Right ventricle myocardium inferior (tissue), 1 donor: ENCODE measurements at regions of chr16 and their contacts with region 1.

Region 1: DNA sequence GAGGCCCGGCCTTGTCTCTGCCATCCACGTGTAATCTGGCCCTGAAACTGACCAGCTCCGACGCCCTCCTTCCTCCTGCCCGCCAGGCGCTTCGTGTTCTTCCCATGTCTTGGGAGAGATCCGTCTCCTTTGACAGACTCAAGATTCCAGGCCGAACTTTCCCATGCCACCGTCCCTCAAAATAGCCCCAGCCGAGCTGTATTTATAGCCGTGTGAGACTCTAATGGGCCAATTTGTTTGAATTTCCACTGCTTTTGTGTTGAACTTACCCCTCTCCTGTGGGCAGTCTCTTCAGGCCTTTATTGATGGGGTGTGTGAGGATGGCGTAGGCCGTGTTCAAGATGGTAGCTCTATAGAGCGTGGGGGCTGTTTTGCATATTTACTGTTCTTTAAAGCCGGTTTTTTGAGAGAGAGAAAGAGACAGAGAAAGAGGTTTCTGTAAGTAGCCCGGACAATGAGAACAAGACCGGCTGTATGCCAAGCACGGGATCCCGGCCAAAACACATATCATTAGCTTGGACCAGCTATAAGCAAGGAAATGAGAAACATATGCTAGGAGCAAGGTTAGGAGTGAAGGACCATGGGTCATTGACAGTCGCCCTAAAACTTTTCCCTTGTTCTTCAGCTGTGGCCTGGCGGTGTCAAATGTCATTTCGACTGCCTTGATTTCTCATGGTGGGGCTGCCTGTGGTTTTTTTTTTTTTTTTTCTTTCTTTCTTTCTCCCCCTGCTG is 124.5 kb upstream of the ZFHX3 start:
- DNase-seq: peak; percentile 85
- ATAC-seq: peak; percentile 72

Region 2: GRCh38 chr16:72938795-72939164 is 233.6 kb before region 1 on chr16:
- intact Hi-C with region 1: loop called (anchors 10 kb)
- DNase-seq: peak; percentile 97
- ATAC-seq: peak; percentile 96

Region 3: DNA sequence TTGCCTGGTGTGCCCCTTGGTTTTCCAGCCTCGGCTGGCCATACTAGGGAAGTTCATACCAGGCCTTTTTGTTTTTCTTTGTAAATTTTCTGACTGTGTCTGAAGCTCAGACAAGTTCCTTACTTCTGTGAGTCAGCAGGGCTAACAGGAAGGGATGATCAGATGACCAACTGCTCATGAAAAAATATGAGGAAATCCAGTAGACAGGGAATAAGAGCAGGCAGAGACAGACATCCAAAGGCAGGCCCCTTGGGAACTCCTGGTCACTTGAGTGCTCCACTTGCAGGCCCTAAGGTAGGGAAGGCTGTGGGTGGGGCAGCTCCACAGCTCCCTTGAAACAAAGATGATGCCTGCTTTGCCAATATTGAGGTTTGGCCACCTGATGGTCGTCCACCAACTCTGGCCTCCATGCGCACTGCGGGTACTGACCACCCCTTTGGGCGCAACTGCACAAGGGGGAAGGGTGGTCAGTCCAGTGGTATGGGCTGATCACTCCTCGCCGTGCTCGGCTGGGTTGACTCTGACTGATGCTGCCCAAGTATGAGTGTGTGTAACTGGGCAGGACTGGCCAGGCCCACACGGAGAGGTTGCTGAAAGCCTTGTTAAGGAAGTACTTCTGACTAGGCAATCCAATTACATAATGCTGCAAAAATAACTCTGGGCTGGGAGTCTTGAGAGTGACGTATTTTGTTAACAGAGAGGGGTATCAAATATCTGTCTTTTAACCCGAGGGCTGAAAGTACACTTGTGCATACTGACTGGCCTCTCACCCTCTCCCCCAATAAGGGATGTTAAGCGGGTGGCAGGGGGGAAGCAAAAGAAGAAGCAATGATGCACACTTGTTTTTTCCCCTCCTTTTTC is 103.6 kb before region 1 on chr16:
- intact Hi-C with region 1: loop called (anchors 5 kb)
- DNase-seq: peak; percentile 87
- ATAC-seq: peak; percentile 78

Region 4: DNA sequence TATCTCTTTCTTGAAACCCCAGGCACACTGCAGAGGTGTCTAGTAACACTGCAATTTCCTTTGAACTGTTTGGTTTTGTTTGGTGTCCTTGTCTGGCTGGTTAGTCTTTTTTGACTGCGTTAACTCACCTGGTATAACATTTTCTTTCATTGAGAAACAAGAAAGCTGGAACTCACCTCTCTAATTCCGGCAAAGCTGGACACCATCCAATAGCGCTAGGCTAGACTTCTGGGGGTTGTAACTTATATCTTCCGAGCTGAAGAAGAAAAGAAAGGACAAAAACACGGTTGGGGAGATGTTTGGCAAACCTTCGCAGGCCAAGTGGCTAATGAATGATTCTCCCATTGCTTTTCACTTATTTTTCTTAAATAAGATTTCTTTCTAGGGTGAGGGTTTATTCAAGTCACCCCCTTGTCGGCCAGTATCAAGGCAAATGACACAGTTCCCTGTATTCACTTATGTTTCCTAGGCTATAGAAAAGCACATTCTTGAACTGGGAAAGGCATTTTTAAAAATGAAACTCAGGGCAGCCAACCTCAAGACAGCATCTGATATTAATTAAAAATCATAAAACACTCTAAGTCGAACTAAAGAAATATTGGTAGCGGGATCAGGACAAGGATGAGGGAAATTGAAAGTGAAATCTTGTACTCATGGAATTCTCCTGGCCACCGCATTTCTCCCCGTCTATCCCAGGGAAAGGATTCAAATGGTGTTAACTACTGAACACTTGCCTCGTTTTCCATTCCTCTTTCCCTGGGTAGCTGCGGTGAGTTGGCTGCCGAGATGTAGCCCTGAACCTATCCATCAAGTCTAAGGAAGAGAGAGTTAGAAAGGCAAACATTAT is 28.6 kb before region 1 on chr16:
- intact Hi-C with region 1: loop called (anchors 2 kb)
- DNase-seq: no peak
- ATAC-seq: no peak